AG04450 (cell line): ENCODE measurements at regions of chr11 and their contacts with region 1.

Region 1: DNA sequence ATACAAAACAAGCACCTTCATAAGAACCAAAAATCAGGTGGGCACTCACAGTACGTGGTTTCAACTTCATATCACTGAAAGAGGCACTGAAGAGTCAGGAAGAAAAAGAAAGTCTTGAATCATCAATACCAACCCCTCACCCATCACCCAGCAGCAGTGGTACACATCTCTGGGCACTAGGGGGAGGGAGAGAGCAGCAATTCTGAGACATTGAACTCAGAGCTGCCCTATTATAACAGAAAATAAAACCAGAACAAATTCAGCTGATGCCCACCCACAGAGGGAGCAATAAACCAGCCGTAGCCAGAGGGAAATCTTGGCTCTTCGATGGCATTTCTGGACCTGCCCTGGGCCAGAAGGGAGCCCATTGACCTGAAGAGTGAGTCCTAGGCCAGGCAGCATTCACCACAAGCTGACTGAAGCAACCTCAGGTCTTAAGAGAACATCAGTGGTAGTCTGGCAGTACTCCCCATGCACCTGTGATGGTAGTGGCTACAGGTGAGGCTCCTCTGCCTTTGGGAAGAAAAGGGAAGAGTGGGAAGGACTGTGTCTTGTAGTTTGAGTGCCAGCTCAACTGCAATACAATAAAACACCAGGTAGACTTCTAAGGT is 42.2 kb upstream of the FAM181B start:
- DNase-seq: peak; percentile 8
- H3K4me3 ChIP-seq: 0 out of 2 replicates have a peak overlapping the region, but pooled peaks have one; percentile 5
- H3K27ac ChIP-seq: no peak overlapping the region
- H3K27me3 ChIP-seq: no peaks in the 10 kb centered on the region
- CTCF ChIP-seq: peak; percentile 92

Region 2: DNA sequence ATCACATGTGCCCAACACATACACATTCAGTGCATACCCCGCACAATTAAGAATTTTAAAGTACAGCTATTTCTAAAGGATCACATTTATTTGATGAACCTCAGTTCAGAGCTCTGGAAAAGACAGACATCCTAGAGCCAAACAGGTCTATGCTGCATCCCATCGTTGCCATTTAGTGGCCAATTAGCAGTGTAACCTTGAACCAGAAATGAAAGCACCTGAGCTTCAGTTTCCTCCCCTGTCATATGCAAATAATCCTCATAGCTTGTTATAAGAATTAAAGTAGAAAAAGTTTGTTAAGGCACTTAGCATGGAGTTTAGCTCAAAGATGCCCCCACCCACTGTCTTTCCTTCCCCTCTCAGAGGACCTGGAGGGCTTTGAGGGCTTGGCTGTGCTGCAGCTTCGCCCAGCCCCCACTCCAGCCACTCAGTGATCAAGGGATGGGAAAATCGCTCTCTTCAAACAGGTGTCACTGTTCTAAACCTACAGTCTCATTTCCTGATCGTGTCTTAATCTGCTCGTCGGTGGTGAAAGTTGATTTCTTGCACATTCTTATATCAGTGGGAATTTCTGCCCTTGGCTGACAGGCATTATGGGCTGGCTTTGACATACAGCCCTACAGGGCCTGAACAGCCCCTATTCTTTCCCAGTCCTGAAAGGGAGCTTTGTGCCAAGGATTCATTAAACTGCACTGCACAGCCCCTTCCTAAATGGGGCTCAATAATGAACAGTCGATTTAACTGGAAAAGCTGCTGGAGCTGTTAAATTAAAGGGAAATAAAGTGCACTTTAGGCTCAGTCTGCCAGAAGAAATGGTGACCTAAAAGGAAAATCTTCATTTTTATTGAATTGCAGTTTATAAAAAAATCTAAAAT is 18.8 kb before region 1 on chr11:
- CTCF ChIA-PET with region 1: interaction called, 15 read pairs
- POLR2A ChIA-PET with region 1: no interaction called
- DNase-seq: no peak
- H3K4me3 ChIP-seq: no peak overlapping the region
- H3K27ac ChIP-seq: no peak overlapping the region
- H3K27me3 ChIP-seq: peaks cover 2% of the 10 kb centered on the region
- CTCF ChIP-seq: no peak

Region 3: GRCh38 chr11:82810326-82810725 is 34.5 kb after region 1 on chr11:
- CTCF ChIA-PET with region 1: interaction called, 10 read pairs
- POLR2A ChIA-PET with region 1: no interaction called
- DNase-seq: no peak
- H3K4me3 ChIP-seq: no peak overlapping the region
- H3K27ac ChIP-seq: no peak overlapping the region
- H3K27me3 ChIP-seq: peaks cover 18% of the 10 kb centered on the region
- CTCF ChIP-seq: no peak

Region 4: GRCh38 chr11:82842019-82842418 is 66.2 kb after region 1 on chr11:
- CTCF ChIA-PET with region 1: interaction called, 13 read pairs
- POLR2A ChIA-PET with region 1: no interaction called
- DNase-seq: no peak
- H3K4me3 ChIP-seq: no peak overlapping the region
- H3K27ac ChIP-seq: no peak overlapping the region
- H3K27me3 ChIP-seq: no peaks in the 10 kb centered on the region
- CTCF ChIP-seq: no peak

Region 5: DNA sequence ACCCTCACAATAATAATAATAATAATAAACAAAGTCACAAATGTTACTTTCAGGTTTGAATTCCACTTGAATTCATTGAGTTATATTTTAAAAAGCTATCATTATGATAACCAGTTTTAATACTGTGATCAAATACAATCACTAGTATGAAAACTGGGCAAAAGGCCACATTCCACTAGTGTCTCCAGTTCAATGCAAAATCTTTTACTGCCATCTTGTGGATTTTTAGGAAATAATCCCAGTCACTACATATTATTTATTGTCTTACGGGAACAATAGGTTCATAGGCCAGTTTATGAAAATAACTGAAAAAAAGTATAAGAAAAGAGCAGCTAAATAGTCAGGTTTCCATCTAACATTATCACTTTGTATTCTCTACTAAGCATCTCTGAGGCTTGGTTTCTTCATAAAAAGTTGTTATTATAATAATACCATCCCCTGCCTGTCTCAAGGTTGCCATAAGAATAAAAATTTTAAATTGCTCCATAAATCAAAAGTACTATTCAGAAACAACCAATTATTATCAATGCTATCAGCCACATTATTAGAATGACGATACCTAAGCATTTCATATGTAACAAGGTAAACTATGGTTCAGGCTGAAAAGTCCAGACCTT is 1044.2 kb after region 1 on chr11:
- CTCF ChIA-PET with region 1: interaction called, 19 read pairs
- POLR2A ChIA-PET with region 1: no interaction called
- DNase-seq: peak; percentile 52
- H3K4me3 ChIP-seq: no peak overlapping the region
- H3K27ac ChIP-seq: no peak overlapping the region
- H3K27me3 ChIP-seq: no peaks in the 10 kb centered on the region
- CTCF ChIP-seq: peak; percentile 58